Aorta (tissue), 5 donors: ENCODE measurements at regions of chr10 and their contacts with region 1.

Region 1: GRCh38 chr10:122342293-122343134 is 32.0 kb upstream of the PLEKHA1 start:
- DNase-seq: no peak
- ATAC-seq: peak; percentile 48
- H3K4me3 ChIP-seq: no peak overlapping the region
- H3K27ac ChIP-seq: no peak overlapping the region
- H3K4me1 ChIP-seq: no peaks in the 10 kb centered on the region
- H3K27me3 ChIP-seq: no peaks in the 10 kb centered on the region

Region 2: GRCh38 chr10:122435212-122435827 is 92.8 kb after region 1 on chr10:
- intact Hi-C with region 1: loop called (anchors 2 to 5 kb)
- DNase-seq: no peak
- ATAC-seq: no peak
- H3K4me3 ChIP-seq: no peak overlapping the region
- H3K27ac ChIP-seq: no peak overlapping the region
- H3K4me1 ChIP-seq: no peaks in the 10 kb centered on the region
- H3K27me3 ChIP-seq: no peaks in the 10 kb centered on the region